ENCODE measurements at regions of chr15 and their contacts with region 1.

Region 1: DNA sequence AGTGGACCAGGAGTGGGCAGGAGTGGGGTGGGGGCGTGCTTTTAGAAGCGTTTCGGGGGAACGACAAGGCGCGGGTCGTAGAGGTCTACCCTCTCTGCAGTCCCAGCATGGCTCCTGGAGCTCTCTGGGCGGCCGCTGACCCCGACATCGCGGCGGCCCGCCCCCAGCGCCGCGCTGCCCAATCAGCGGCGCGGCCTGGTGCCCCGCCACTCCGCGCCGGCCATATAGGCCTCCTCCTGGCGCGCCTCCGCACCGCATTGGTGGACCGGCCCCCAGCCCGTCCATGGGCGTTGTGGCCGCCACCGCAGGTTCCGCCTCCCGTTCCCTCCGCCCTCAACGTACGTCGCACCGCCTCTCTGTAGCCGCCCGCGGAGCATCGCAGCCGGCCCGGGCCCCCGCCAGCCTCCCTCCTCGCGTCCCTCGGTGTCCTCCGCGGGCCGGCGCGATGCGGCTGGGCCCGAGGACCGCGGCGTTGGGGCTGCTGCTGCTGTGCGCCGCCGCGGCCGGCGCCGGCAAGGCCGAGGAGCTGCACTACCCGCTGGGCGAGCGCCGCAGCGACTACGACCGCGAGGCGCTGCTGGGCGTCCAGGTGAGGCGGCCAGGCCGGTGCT is at the start of gene RCN2:
- DNase-seq: peak; percentile 91
- ATAC-seq: peak; percentile 97
- H3K4me3 Mint-ChIP-seq: peak within 1 kb of the TSS; percentile 90
- H3K27ac Mint-ChIP-seq: peak within 1 kb of the TSS; percentile 93
- H3K4me1 Mint-ChIP-seq: peaks cover 40% of the 10 kb centered on the region
- H3K27me3 Mint-ChIP-seq: no peaks in the 10 kb centered on the region
- CTCF ChIP-seq: no peak
- total RNA-seq, gene RCN2: 23.8 and 25.0 TPM in 2 replicates

Region 2: GRCh38 chr15:76311100-76311953 is 620.2 kb before region 1 on chr15 and contains the start of gene ETFA:
- CTCF ChIA-PET with region 1: no interaction called
- POLR2A ChIA-PET with region 1: no interaction called
- intact Hi-C with region 1: loop called (anchors 10 kb)
- DNase-seq: peak; percentile 90
- ATAC-seq: peak; percentile 97
- H3K4me3 Mint-ChIP-seq: peak within 1 kb of the TSS; percentile 89
- H3K27ac Mint-ChIP-seq: peak within 1 kb of the TSS; percentile 82
- H3K4me1 Mint-ChIP-seq: peaks cover 35% of the 10 kb centered on the region
- H3K27me3 Mint-ChIP-seq: no peaks in the 10 kb centered on the region
- CTCF ChIP-seq: no peak
- total RNA-seq, gene ETFA: 112 and 113 TPM in 2 replicates

Region 3: GRCh38 chr15:76517910-76518309 is 413.6 kb before region 1 on chr15:
- CTCF ChIA-PET with region 1: no interaction called
- POLR2A ChIA-PET with region 1: no interaction called
- intact Hi-C with region 1: no loop called
- DNase-seq: no peak
- ATAC-seq: no peak
- H3K4me3 Mint-ChIP-seq: no peak overlapping the region
- H3K27ac Mint-ChIP-seq: no peak overlapping the region
- H3K4me1 Mint-ChIP-seq: no peaks in the 10 kb centered on the region
- H3K27me3 Mint-ChIP-seq: no peaks in the 10 kb centered on the region
- CTCF ChIP-seq: no peak

Region 4: DNA sequence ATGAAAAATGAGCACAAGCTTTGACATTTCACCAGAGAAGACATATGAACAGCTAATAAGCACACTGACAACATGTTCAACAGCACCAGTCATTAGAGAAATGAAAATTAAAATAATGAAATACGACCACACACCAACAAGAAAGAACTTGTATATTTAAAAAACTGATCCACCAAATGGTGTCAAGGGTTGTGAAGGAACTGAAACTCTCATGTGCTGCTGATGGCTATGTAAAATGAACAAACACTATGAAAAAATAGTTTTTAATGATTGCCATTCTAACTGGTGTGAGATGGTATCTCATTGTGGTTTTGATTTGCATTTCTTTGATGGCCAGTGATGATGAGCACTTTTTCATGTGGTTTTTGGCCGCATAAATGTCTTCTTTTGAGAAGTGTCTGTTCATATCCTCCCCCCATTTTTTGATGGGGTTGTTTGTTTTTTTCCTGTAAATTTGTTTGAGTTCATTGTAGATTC is 220.1 kb before region 1 on chr15:
- CTCF ChIA-PET with region 1: no interaction called
- POLR2A ChIA-PET with region 1: no interaction called
- intact Hi-C with region 1: no loop called
- DNase-seq: no peak
- ATAC-seq: peak; percentile 45
- H3K4me3 Mint-ChIP-seq: no peak overlapping the region
- H3K27ac Mint-ChIP-seq: no peak overlapping the region
- H3K4me1 Mint-ChIP-seq: peaks cover 29% of the 10 kb centered on the region
- H3K27me3 Mint-ChIP-seq: no peaks in the 10 kb centered on the region
- CTCF ChIP-seq: no peak

Region 5: DNA sequence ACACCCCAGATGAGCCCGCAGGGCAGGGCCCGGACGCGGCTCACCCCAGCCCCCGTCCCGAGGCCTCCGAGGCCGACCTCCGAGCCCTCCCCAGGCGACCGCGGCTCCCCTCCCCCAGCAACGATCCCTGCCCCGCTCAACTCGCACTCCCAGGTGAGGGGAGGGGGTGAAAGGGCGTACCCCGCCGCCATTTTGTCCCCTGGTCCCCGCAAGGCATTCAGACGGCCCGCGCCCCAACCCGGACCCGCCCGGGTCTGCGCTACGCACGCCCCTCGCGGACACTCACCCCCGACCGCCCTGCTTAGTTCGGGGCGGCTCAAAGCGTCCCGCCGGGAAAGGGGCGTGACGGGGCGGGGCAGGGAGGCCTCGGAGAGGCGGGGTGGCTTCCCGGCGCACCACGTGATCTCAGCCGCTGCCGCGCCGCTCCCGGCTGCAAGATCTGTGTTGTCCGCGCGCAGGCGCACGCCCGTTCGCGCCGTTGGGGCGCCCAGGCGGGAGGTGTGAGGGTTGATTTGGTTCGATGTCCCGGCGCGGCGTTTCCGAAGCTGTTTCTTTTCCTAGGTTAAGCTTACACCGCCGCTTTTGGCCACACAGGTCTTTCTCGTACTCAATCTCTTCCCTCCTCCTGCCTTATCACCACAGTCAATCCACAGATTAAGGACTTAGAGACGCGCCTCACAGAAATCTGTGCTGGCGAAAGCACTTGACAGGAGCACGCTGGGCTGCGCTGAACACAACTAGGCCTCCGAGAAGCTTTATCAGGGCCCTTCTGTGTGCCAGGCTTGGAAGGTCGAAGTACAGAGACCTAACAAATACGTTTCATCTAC is 26.3 kb before region 1 on chr15 and contains the start of gene SCAPER:
- CTCF ChIA-PET with region 1: no interaction called
- POLR2A ChIA-PET with region 1: interaction called, 27 read pairs
- intact Hi-C with region 1: loop called (anchors 1 kb)
- DNase-seq: peak; percentile 92
- ATAC-seq: peak; percentile 86
- H3K4me3 Mint-ChIP-seq: peak within 1 kb of the TSS; percentile 94
- H3K27ac Mint-ChIP-seq: peak within 1 kb of the TSS; percentile 87
- H3K4me1 Mint-ChIP-seq: peaks cover 48% of the 10 kb centered on the region
- H3K27me3 Mint-ChIP-seq: no peaks in the 10 kb centered on the region
- CTCF ChIP-seq: no peak
- total RNA-seq, gene SCAPER: 28.9 and 38.8 TPM in 2 replicates

Region 6: DNA sequence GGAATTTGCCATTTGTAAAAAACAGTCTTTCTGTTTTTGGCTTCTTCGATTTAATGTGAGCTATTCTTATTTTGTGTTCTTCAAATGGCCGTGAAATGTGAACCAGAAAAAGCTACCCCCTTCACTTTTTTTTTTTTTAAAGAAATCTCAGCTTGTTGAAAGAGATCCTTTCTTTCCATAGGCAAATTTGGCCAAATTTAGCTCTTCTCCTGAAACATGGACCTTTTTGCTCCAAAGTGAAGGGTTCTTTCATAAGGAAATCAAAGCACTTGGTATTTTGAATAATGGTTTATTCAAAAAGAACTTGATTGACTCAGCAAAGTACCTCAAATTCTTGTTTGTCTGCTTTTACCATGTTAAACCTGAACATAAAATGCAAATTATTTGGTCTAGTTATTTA is 10.1 kb after region 1 on chr15:
- CTCF ChIA-PET with region 1: interaction called, 5 read pairs
- POLR2A ChIA-PET with region 1: interaction called, 10 read pairs
- intact Hi-C with region 1: no loop called
- DNase-seq: no peak
- ATAC-seq: no peak
- H3K4me3 Mint-ChIP-seq: no peak overlapping the region
- H3K27ac Mint-ChIP-seq: no peak overlapping the region
- H3K4me1 Mint-ChIP-seq: peaks cover 20% of the 10 kb centered on the region
- H3K27me3 Mint-ChIP-seq: no peaks in the 10 kb centered on the region
- CTCF ChIP-seq: no peak

Region 7: DNA sequence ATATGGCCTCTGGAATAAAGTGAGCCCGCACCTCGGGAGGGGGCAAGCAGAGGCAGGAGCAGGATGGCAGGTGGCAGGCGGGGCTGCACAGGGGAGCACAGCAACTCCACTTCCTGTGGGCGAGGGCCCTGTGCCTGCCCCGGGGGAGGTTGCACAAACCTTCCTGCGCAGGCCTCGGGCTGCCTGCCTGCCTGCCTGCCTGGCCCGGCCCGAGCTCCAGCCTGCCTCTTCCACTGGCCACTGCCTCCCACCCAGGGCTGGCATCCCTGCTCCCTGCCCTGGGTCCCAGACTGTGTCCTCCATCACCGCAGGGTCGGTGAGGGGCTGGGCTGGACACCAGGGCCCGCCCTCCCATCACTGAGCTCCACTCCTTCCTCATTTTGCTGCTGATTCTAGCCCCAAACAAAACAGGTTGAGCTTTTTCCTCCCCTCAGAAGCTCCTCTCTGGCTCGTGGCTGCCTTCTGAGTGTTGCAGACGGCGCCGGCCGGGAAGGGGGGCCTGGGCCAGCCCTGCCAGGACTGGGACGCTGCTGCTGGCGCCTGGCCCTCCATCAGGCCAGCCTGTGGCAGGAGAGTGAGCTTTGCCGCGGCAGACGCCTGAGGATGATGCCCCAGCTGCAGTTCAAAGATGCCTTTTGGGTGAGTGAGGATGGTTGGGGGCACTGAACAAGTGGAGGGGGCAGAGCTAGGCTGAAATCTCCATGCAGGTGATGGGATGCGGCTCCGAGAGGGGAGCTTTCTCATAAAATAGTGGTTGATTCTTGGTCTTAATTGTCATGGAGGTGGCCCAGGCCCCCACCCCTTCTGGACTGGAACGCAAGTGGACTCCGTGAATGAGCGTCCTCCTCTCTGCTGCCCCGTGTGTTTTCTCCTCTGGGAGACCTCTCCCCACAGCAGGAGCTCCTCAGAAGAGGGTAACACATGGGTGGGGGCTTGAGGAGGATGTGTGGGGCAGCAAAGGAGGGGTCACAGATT is 63.8 kb after region 1 on chr15 and contains the start of gene PSTPIP1:
- CTCF ChIA-PET with region 1: interaction called, 4 read pairs
- POLR2A ChIA-PET with region 1: interaction called, 16 read pairs
- intact Hi-C with region 1: loop called (anchors 2 kb)
- DNase-seq: peak; percentile 64
- ATAC-seq: peak; percentile 90
- H3K4me3 Mint-ChIP-seq: peak within 1 kb of the TSS; percentile 88
- H3K27ac Mint-ChIP-seq: peak within 1 kb of the TSS; percentile 95
- H3K4me1 Mint-ChIP-seq: peaks cover 60% of the 10 kb centered on the region
- H3K27me3 Mint-ChIP-seq: no peaks in the 10 kb centered on the region
- CTCF ChIP-seq: no peak
- total RNA-seq, gene PSTPIP1: 33.7 and 42.7 TPM in 2 replicates

Region 8: GRCh38 chr15:77070495-77071304 is 139.2 kb after region 1 on chr15 and contains the start of gene TSPAN3:
- CTCF ChIA-PET with region 1: no interaction called
- POLR2A ChIA-PET with region 1: no interaction called
- intact Hi-C with region 1: loop called (anchors 5 kb)
- DNase-seq: peak; percentile 95
- ATAC-seq: peak; percentile 95
- H3K4me3 Mint-ChIP-seq: peak within 1 kb of the TSS; percentile 89
- H3K27ac Mint-ChIP-seq: peak within 1 kb of the TSS; percentile 81
- H3K4me1 Mint-ChIP-seq: peaks cover 50% of the 10 kb centered on the region
- H3K27me3 Mint-ChIP-seq: no peaks in the 10 kb centered on the region
- CTCF ChIP-seq: no peak
- total RNA-seq, gene TSPAN3: 104 and 113 TPM in 2 replicates

Region 9: DNA sequence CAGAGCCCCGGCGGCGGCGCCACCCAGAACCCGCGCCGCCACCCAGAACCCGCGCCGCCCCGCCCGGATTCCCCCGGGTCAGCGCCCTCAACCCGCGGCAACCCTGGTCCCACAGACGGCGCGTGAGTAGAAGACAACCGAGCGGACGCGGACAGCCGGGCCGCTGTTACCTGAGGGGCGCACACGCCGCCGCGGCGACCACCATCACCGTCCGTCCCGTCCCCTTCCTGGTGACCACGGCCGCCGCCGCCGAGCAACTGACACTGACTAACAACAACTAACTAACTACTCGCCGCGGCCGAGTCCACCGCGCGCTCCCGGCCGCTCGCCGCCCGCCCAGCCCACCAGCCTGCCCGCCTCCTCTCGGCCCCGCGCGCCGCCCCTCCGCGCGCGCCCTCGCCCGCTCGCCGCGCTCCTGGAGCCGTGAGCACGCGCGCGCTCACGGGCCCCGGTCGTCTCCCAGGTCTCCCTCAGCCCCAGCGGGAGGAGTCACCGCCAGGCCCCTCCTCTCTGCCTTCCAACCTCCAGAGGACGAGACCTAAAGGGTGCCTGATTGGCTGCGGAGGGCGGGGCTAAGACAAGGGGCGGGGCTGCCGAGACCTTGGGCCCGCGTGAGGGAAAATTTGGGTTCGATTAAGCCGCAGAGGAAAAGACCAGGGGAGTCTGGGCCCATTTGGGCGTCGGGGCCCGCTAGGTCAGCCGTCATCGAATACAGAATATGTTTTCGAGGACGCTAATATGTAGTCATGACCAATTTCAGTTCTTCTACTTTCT is 488.5 kb after region 1 on chr15 and contains the start of gene PEAK1:
- CTCF ChIA-PET with region 1: no interaction called
- POLR2A ChIA-PET with region 1: interaction called, 6 read pairs
- intact Hi-C with region 1: loop called (anchors 1 kb)
- DNase-seq: peak; percentile 98
- ATAC-seq: peak; percentile 96
- H3K4me3 Mint-ChIP-seq: peak within 1 kb of the TSS; percentile 97
- H3K27ac Mint-ChIP-seq: peak within 1 kb of the TSS; percentile 98
- H3K4me1 Mint-ChIP-seq: peaks cover 46% of the 10 kb centered on the region
- H3K27me3 Mint-ChIP-seq: no peaks in the 10 kb centered on the region
- CTCF ChIP-seq: no peak
- total RNA-seq, gene PEAK1: 31.8 and 34.2 TPM in 2 replicates

Measured in activated B cell treated with CpG ODN at 0.5 μM for 24 hours (primary cell).